ENCODE measurements at regions of chr10 and their contacts with region 1.

Region 1: DNA sequence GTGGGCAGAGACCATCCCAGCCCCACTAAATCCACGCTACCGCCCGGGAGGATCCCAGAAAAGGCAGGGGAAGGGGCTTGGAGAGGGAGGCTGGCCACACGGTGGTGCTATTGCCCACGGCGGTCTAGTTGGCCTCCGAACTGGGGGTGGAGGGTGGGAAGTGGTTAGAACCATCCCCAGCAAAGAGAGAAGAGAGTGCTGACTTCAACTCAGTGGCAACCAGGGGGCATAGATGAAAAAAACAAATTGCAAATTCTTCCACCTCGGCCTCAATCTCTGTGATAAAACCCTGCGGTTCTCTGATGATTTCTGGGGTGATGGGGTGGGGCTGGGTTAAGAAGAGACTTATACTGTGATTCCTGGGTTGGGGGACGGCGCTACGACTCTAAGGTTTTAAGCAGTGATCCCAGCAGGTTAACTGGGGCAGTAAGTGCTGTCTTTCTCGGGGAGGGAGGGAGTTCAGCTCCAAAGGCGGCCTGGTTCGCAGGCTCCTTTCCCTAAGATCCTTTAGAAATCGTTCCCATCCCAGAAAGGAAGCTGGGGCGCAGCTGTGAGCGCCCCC is 154.5 kb upstream of the LYZL2 start:
- DNase-seq: peak; percentile 67
- H3K4me3 ChIP-seq: peak overlapping the region; percentile 51 to 53
- H3K27ac ChIP-seq: peak overlapping the region; percentile 83 to 84
- H3K4me1 ChIP-seq: no peaks in the 10 kb centered on the region
- H3K27me3 ChIP-seq: no peaks in the 10 kb centered on the region
- CTCF ChIP-seq: peak; percentile 80 to 85 (median 84)
- POLR2A ChIP-seq: no peak

Region 2: DNA sequence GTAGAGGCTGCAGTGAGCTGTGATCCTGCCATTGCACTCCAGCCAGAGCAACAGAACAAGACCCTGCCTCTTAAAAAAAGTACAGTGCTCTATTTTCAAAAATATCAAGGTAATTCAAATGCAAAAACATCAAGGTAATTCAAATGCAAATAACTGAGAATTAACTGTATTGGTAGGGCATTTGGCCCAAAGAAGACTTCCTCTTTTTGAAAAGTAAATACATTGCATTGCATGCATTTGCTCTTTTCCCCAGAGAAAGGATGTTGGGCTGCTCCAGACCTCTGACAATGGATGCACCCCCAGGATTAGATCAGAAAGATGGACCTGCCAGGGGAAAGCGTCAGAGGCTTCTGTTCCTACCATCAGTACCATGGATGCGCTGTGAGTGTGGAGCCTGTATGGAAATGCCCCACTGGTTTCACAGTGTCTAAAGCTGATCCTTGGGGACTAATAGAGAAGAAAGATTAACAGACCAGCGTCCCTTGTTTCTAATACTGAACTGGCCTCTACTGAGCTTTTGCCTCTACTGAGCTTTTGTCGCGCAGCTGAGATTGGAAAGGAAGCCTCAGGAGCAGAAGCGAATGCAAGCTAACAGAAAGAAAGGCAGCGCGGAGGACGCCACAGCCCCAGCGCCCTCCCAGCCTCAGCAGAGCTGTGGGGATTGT is 60.9 kb before region 1 on chr10:
- intact Hi-C with region 1: no loop called
- DNase-seq: no peak
- H3K4me3 ChIP-seq: no peak overlapping the region
- H3K27ac ChIP-seq: no peak overlapping the region
- H3K4me1 ChIP-seq: no peaks in the 10 kb centered on the region
- H3K27me3 ChIP-seq: no peaks in the 10 kb centered on the region
- CTCF ChIP-seq: no peak
- POLR2A ChIP-seq: no peak

Region 3: DNA sequence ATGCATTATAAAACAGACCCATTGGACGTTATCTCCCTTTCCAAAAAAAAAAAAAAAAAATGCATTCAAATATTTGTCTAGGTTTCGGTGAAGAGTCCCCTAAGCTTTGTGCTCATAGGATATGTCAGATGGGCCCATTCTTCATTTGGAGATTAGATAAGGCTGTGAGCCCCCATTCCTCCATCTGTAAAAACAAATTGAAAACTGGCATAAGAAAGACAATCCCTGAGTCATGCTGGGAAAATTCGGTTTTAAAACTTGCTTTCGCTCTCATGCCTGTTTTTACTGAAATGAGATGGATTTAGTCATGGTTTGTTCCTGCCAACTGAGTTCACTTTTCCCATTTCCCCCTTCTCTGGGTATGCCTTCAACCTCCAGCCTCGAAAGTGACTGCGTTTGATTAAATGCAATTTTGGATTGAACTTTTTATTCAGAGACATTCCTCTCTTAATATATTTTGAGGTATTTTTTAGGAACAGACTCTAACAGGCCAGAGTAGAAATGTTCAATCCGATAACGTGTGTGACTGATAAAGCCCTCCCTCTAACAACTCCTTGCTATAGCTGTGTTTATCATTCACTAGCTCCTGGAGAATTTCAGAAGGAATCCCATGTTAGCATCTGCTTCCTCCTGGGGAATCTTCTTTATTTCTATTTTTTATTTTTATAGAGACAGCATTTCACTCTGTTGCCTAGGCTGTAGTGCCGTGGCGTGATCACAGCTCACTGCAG is 36.4 kb after region 1 on chr10:
- intact Hi-C with region 1: no loop called
- DNase-seq: no peak
- H3K4me3 ChIP-seq: no peak overlapping the region
- H3K27ac ChIP-seq: no peak overlapping the region
- H3K4me1 ChIP-seq: no peaks in the 10 kb centered on the region
- H3K27me3 ChIP-seq: no peaks in the 10 kb centered on the region
- CTCF ChIP-seq: no peak
- POLR2A ChIP-seq: no peak

Region 4: DNA sequence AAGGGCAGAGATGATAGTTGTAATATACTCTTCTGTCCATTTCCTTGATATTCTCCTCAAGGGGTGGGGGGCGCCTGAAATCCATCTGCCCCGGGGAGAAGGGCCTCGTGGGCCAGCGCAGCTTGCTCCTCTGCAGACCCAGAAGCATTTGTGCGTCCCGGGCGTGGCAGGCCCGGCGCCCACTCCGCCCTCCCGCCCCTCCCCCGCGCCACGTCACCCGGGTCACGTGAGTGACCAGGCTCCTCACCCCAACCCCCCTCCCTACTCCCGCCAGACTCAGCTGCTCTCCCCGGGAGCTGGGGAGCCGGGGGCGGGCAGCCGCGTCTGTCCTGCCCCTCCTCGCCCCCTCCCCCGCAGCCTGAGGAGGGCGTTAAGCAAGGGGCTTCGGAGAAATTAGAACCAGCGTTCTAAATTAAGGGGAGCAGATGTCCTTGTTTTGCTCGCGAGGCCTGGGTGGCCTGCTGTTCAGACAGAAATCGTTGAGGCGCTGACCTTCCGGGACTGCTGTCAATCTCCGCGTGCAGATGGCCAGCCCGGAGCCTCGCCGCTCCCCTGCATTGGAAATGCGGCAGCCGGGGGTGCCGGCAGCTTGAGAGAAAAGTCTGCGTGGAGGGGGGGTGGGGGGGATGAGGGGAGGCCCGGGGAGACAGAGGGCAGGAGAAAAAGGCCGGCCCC is 349.7 kb after region 1 on chr10:
- intact Hi-C with region 1: loop called (anchors 10 kb)
- DNase-seq: peak; percentile 40
- H3K4me3 ChIP-seq: peak overlapping the region; percentile 24 to 26
- H3K27ac ChIP-seq: peak overlapping the region; percentile 61 to 72
- H3K4me1 ChIP-seq: no peaks in the 10 kb centered on the region
- H3K27me3 ChIP-seq: no peaks in the 10 kb centered on the region
- CTCF ChIP-seq: no peak
- POLR2A ChIP-seq: peak; percentile 12

Region 5: DNA sequence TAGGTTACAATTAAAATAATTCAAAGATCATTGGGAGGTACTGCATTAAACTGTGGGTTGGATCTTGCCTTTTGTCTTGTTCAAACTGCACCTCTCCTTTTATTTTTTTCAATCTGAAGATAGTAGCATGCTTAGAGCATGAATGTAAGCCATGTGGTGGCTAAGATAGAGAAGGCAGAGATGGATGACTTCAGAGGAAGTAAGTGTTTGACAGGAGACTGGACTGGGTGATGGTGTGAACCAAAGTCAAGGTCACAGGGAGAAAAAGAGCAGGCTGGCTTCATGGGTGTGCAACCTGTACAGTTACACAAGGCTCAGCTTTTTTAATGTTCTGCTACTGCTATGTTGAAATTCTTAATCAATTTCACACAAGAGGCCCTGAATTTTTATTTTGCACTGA is 620.6 kb after region 1 on chr10:
- intact Hi-C with region 1: no loop called
- DNase-seq: no peak
- H3K4me3 ChIP-seq: no peak overlapping the region
- H3K27ac ChIP-seq: no peak overlapping the region
- H3K4me1 ChIP-seq: no peaks in the 10 kb centered on the region
- H3K27me3 ChIP-seq: no peaks in the 10 kb centered on the region
- CTCF ChIP-seq: no peak
- POLR2A ChIP-seq: no peak

Region 6: DNA sequence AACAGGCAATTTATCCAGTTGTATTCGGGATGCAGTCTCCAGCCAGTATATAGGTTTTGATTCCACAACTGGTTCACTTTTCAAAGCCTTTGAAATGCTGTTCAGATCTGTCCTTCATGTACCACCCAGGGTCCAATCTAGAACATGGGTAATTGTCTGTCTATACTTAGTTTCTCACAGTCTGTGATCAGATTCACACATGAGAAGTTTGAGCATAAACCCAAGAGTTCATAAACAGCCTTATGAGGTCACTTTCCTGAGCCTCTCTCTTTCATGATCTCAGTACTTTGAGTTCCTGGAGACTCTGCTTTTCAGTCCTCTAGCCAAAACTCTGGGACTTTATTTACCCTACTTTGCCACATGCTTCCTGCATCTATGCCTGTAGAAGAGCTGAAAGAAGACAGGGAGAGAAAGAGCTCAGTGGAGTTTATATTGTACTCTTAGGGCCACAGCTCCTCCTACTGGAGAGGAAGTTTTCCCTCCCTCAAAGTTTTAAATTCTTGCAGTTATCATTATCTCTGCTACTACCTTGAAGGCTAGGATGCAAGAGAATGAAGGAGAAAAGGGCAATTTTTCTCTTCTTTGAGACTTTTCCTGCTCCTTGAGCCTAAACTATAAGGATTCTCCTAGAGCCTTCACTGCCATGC is 707.0 kb after region 1 on chr10:
- intact Hi-C with region 1: loop called (anchors 10 kb)
- DNase-seq: no peak
- H3K4me3 ChIP-seq: no peak overlapping the region
- H3K27ac ChIP-seq: no peak overlapping the region
- H3K4me1 ChIP-seq: no peaks in the 10 kb centered on the region
- H3K27me3 ChIP-seq: no peaks in the 10 kb centered on the region
- CTCF ChIP-seq: peak in 3 of 4 experiments; percentile 34 to 48 (median 41)
- POLR2A ChIP-seq: no peak

Region 7: DNA sequence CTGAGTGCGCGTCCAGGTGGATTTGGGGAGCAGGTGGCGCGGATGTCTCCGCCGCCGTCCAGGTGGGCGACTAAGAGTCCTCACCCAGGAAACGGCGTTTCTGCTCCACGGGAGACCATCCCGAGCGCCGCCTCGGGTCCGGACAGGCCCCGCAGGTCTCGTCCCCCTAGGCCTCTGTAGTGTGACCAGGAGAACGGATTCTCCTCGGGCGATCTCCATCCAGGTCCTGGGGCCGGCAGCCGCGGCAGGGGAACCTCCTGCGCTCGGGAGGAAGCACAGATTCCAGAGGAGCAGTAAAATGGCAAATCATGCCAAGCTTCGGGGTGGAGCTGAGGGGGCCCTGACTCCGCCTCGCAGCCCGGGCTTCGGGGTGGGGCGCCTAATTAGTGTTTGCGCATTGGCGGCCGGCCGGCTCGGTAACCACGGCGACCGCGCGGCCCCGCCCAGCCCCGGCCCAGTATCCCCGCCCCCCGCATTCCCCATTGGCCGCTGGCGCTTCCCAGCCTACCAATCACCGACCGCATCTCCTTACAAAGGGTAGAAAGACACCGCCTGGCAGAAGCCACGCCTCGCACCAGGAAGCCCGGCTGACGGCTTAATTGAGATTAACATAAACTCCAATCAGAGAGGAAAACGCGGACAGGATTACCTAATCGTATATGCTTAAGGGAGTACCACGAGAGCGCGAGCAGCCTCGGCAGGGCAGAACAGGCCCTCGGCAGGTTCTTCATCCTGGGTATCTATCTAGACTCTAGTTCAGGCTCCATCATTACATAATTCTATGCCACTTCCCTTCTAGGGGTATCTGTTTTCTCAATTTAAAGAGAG is 976.0 kb after region 1 on chr10:
- intact Hi-C with region 1: loop called (anchors 10 kb)
- DNase-seq: peak; percentile 97
- H3K4me3 ChIP-seq: peak overlapping the region; percentile 56 to 80
- H3K27ac ChIP-seq: peak overlapping the region; percentile 91 to 92
- H3K4me1 ChIP-seq: peaks cover 2% of the 10 kb centered on the region
- H3K27me3 ChIP-seq: no peaks in the 10 kb centered on the region
- CTCF ChIP-seq: no peak
- POLR2A ChIP-seq: peak; percentile 91

Measured in prostate gland (tissue), 2 donors.